Activated CD4-positive, alpha-beta memory T cell treated with anti-CD3 and anti-CD28 coated beads for 36 hours (primary cell): ENCODE measurements at regions of chr19 and their contacts with region 1.

Region 1: DNA sequence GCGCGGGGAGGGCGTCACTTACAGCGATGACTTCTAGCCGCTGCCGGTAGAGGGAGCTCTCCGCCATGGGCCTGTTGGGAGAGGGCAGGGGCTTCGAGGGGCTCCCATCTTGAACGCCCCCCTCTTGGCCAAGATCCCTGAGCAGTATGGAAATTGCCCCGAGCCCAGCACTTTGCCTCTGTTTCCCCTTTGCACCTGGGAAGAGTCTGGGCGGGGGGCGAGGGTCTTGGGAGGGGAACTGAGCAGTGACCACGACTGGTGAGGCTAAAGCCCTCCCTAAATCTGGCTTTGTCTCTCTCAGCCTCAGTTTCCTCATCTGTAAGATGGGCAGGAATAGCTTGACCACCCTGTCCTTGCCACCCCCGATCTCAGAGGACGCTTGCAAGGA is 2.8 kb downstream of the PALM3 start:
- DNase-seq: peak; percentile 62
- H3K4me3 Mint-ChIP-seq: no peak overlapping the region
- H3K27ac Mint-ChIP-seq: no peak overlapping the region
- H3K4me1 Mint-ChIP-seq: peaks cover 15% of the 10 kb centered on the region
- H3K27me3 Mint-ChIP-seq: peaks cover 15% of the 10 kb centered on the region

Region 2: GRCh38 chr19:13887517-13887916 is 171.6 kb before region 1 on chr19:
- CTCF ChIA-PET with region 1: interaction called, 28 read pairs
- POLR2A ChIA-PET with region 1: no interaction called
- intact Hi-C with region 1: no loop called
- DNase-seq: no peak
- H3K4me3 Mint-ChIP-seq: no peak overlapping the region
- H3K27ac Mint-ChIP-seq: no peak overlapping the region
- H3K4me1 Mint-ChIP-seq: peaks cover 4% of the 10 kb centered on the region
- H3K27me3 Mint-ChIP-seq: no peaks in the 10 kb centered on the region

Region 3: DNA sequence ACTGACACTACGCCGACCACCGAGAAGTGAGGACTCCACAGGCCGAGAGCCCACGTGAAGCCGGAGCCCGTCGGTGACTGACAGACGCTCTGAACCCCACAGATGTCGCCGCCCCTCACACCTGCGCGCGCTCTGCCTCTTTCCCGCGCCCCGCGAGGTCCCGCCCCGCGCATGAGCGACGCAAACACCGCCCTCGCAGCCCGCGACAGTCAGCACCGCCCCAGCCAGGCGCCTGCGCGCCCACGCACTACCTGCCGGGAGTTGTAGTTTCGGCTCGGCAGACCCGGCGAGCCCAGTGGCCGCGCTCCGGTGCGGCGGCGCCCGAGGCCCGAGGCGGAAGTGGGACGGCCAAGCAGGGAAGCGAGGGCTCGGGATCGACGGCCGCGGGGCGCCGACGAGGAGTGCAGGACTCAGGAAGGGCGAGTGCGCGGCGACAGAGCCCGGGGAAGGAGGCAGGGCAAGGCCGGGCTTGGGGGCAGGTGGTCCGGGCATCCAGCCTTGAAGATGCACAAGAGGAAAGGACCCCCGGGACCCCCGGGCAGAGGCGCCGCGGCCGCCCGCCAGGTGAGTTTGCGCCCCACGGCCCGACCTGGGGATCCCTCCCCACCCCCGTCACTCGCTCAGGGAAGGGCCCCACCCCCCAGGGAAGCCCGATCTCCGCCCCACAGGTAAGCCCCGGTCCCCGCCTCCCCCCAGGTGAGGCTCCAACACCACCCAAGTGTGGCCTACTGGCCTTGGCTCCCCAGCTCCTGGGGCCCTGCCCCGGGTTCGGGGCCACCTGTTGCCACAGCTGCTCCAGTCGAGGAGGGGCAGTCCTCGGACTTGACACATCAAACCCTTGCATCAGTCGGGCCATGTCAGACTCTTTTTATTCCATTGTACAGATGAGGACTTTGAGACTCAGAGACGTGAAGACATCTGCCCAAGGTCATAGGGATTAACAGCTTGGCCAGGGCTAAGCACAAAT is 152.9 kb before region 1 on chr19 and contains the starts of genes BRME1 and CC2D1A:
- CTCF ChIA-PET with region 1: interaction called, 12 read pairs
- POLR2A ChIA-PET with region 1: no interaction called
- intact Hi-C with region 1: loop called (anchors 5 kb)
- DNase-seq: peak; percentile 97
- H3K4me3 Mint-ChIP-seq: peak within 1 kb of the TSS; percentile 83
- H3K27ac Mint-ChIP-seq: peak within 1 kb of the TSS; percentile 86
- H3K4me1 Mint-ChIP-seq: peaks cover 23% of the 10 kb centered on the region
- H3K27me3 Mint-ChIP-seq: no peaks in the 10 kb centered on the region
- total RNA-seq, gene BRME1: 7.7 to 9.0 TPM
- total RNA-seq, gene CC2D1A: 25.8 to 31.0 TPM

Region 4: GRCh38 chr19:14048443-14049153 is 10.5 kb before region 1 on chr19:
- CTCF ChIA-PET with region 1: interaction called, 99 read pairs
- POLR2A ChIA-PET with region 1: no interaction called
- intact Hi-C with region 1: no loop called
- DNase-seq: peak; percentile 83
- H3K4me3 Mint-ChIP-seq: no peak overlapping the region
- H3K27ac Mint-ChIP-seq: peak overlapping the region; percentile 51
- H3K4me1 Mint-ChIP-seq: peaks cover 4% of the 10 kb centered on the region
- H3K27me3 Mint-ChIP-seq: no peaks in the 10 kb centered on the region

Region 5: DNA sequence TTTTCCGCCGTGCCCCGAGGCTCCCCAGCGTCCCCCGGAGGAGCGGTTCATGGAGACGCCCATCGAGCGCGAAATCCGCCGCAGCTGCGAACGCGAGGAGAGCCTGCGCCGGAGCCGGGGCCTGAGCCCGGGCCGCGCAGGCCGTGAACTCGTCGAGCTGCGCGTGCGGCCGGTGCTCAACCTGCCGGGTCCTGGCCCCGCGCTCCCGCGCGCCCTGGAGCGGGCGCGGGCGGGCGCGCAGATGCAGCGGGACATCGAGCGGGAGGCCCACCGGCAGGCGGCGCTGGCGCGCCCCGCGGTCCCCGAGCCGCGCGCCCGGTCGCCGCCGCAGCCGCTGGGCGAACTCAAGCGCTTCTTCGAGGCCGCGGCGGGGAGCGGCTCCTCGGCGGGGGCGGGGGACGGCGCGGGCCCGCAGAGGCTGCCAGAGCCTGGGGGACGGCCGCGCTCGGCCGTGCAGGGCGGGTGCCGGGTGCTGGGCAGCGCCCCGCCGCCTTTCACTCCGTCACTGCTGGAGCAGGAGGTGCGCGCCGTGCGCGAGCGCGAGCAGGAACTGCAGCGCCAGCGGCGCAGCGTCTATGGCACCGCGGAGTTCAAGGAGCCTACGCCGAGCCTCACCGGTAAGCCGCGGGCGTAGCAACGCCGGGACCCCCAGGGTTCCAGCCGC is 14.3 kb after region 1 on chr19:
- CTCF ChIA-PET with region 1: interaction called, 83 read pairs
- POLR2A ChIA-PET with region 1: no interaction called
- intact Hi-C with region 1: no loop called
- DNase-seq: peak; percentile 80
- H3K4me3 Mint-ChIP-seq: peak overlapping the region; percentile 95
- H3K27ac Mint-ChIP-seq: peak overlapping the region; percentile 84
- H3K4me1 Mint-ChIP-seq: peaks cover 13% of the 10 kb centered on the region
- H3K27me3 Mint-ChIP-seq: no peaks in the 10 kb centered on the region

Region 6: DNA sequence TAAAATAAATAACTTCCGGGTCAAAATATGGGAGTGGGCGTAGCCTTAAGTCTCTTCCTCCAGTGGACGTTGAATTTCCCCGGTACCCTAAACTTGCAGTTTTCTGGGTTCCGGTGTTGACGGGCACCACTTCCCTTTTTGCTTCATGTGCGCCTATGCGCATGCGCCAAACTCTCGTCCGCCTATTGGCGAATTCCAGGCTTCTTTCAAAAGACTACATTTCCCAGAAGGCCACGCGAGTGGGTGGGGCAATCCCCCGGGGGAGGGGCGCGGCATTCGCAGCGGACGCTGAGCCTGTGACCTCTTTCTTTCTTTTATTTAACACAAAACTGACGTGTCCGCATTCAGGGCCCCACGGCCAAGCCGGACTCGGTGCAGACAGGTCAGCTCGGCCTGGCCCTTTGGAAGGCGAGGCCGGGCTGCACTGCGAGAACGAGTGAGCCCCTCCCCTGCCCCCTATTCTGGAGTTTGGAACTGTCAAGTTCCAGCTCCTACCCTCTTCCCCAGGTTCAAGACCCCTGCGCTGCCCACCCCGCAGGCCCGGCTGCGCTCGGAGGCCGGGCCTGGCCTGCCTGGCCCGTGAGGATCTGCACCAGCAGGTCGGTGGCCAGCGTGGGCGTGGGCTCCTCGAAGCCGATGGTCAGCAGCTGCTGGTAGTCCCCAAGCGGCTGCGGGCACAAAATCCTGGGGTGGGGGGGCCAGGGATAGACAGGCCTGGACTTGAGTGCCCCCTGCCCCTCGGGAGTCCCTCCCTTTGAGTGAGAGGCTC is 22.4 kb after region 1 on chr19:
- CTCF ChIA-PET with region 1: interaction called, 14 read pairs
- POLR2A ChIA-PET with region 1: no interaction called
- intact Hi-C with region 1: no loop called
- DNase-seq: peak; percentile 99
- H3K4me3 Mint-ChIP-seq: peak overlapping the region; percentile 84
- H3K27ac Mint-ChIP-seq: peak overlapping the region; percentile 87
- H3K4me1 Mint-ChIP-seq: peaks cover 17% of the 10 kb centered on the region
- H3K27me3 Mint-ChIP-seq: peaks cover 2% of the 10 kb centered on the region